ENCODE measurements at regions of chr17 and their contacts with region 1.

Region 1: GRCh38 chr17:64025732-64026294 is 5.4 kb upstream of the ICAM2 start:
- DNase-seq: peak; percentile 70 to 85
- H3K4me3 ChIP-seq: peak overlapping the region in 1 of 4 experiments; percentile 20; a peak in 1 of 8 replicates
- H3K27ac ChIP-seq: no peak overlapping the region
- H3K4me1 ChIP-seq: no peaks in the 10 kb centered on the region; a peak in 1 of 7 replicates
- H3K27me3 ChIP-seq: peaks cover 0 to 4% (median 1%) of the 10 kb centered on the region in 4 experiments; a peak in 3 of 7 replicates
- CTCF ChIP-seq: peak; percentile 94 to 99 (median 99)
- EP300 ChIP-seq: peak in 1 of 2 experiments; percentile 34; a peak in 1 of 3 replicates
- POLR2A ChIP-seq: no peak
- RAD21 ChIP-seq: peak; percentile 71 to 78

Region 2: DNA sequence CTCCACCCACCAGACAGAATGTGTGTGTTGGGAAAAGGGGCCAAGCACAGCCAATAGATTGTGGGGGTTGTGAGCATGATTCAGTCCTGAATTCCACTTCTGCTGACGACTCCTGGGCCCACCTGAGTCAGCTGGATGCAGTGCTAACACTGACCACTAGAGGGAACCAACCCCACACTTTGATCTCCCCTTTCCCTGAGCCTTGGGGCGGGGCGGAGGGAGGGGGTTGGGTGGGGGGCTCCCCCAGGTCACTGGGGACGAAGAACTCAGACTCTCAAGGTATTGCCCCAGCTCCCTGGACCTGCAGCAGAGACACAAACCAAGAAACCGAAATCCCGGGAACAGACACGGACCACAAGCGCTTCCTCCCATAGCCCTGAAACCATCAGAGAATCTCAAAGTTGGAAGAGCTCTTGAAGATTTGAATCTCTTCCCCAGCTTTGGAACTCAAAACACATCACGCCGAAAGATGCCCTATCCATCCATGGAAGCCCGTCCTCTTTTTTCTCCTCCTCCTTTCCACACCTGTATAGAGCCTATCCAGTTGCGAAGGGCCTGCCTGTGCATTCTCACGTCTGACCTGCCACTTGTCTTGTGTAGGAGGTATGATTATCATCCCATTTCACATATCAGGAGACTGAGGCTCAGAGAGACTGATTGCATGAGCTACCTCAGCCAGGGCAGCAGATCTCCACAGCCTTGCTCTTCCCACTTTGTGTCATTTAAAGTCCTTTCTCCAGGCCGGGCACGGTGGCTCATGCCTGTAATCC is 114.0 kb before region 1 on chr17:
- CTCF ChIA-PET with region 1: interaction called, 59 read pairs
- POLR2A ChIA-PET with region 1: no interaction called
- DNase-seq: peak in 1 of 2 experiments; percentile 87
- H3K4me3 ChIP-seq: no peak overlapping the region
- H3K27ac ChIP-seq: no peak overlapping the region
- H3K4me1 ChIP-seq: peaks cover 0 to 2% (median under 1%) of the 10 kb centered on the region in 4 experiments; a peak in 2 of 7 replicates
- H3K27me3 ChIP-seq: no peaks in the 10 kb centered on the region
- CTCF ChIP-seq: peak; percentile 63 to 83 (median 69)
- EP300 ChIP-seq: no peak
- POLR2A ChIP-seq: no peak
- RAD21 ChIP-seq: peak; percentile 62 to 65

Region 3: DNA sequence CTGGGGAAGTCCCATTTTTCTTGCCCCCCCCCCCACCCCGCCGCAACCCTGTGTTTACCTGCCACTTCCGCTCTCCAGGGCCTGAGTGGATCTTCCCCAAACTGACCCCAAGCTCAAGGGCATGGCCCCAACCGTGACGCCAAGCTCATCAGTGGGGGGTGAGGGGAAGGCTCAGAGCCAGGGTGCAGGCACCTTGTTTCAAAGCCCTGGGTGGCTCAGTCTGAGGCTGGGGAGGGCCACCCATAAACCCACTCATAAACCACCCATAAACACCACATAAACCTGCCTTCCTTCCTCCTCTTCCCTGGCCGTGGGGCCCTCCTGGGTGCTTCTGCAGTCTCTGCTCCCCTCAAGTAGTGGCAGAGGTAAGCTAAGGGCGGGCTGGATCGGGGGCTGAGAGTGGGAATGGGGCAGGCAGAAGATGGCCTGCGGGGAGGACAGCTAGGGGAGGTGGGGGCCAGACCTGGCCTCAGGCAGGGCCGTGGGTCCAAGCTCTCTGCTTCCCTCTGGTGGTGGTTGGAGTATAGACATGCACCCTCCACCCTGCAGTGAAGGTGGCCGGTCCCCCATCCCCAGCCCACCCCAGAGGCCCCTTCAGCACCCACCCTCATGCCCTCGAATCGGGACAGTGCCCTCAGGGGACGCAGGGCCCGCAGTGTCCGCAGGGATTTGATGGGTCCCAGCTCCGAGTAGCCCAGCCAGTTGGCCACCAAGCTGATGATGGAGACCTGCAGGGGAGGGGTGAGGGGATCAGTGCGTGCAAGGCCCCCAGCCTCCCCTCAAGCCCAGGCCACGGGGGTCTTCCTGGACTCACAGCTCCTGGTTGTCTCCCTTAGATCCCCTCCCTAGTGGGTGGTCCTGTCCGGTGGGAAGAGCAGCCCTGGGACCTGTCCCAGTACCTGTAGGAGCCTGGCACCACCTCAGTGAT is 79.1 kb before region 1 on chr17:
- CTCF ChIA-PET with region 1: interaction called, 12 read pairs
- POLR2A ChIA-PET with region 1: no interaction called
- DNase-seq: peak in 1 of 2 experiments; percentile 85
- H3K4me3 ChIP-seq: no peak overlapping the region
- H3K27ac ChIP-seq: no peak overlapping the region
- H3K4me1 ChIP-seq: peaks cover 0 to 8% (median 1%) of the 10 kb centered on the region in 4 experiments; a peak in 3 of 7 replicates
- H3K27me3 ChIP-seq: no peaks in the 10 kb centered on the region
- CTCF ChIP-seq: peak; percentile 75 to 92 (median 81)
- EP300 ChIP-seq: no peak
- POLR2A ChIP-seq: no peak
- RAD21 ChIP-seq: peak; percentile 64 to 71

Region 4: GRCh38 chr17:64036198-64036922 is 10.5 kb after region 1 on chr17:
- CTCF ChIA-PET with region 1: interaction called, 105 read pairs
- POLR2A ChIA-PET with region 1: no interaction called
- DNase-seq: peak in 1 of 2 experiments; percentile 65
- H3K4me3 ChIP-seq: no peak overlapping the region
- H3K27ac ChIP-seq: no peak overlapping the region
- H3K4me1 ChIP-seq: no peaks in the 10 kb centered on the region
- H3K27me3 ChIP-seq: no peaks in the 10 kb centered on the region
- CTCF ChIP-seq: peak; percentile 68 to 84 (median 82)
- EP300 ChIP-seq: no peak
- POLR2A ChIP-seq: no peak
- RAD21 ChIP-seq: peak; percentile 42 to 56; a peak in 3 of 4 replicates

Region 5: GRCh38 chr17:64063766-64064224 is 38.0 kb after region 1 on chr17:
- CTCF ChIA-PET with region 1: interaction called, 78 read pairs
- POLR2A ChIA-PET with region 1: interaction called, 3 read pairs
- DNase-seq: peak; percentile 43 to 82
- H3K4me3 ChIP-seq: peak overlapping the region in 1 of 4 experiments; percentile 35; a peak in 2 of 8 replicates
- H3K27ac ChIP-seq: no peak overlapping the region
- H3K4me1 ChIP-seq: peaks cover 0 to 3% (median 0%) of the 10 kb centered on the region in 4 experiments; a peak in 1 of 7 replicates
- H3K27me3 ChIP-seq: no peaks in the 10 kb centered on the region
- CTCF ChIP-seq: peak; percentile 90 to 93 (median 92)
- EP300 ChIP-seq: no peak
- POLR2A ChIP-seq: 0 out of 3 replicates have a peak, but pooled peaks of 1 of the 2 experiments have one; percentile 30
- RAD21 ChIP-seq: peak; percentile 89 to 90

Region 6: GRCh38 chr17:64160378-64160777 is 134.6 kb after region 1 on chr17:
- CTCF ChIA-PET with region 1: no interaction called
- POLR2A ChIA-PET with region 1: no interaction called
- DNase-seq: no peak
- H3K4me3 ChIP-seq: no peak overlapping the region
- H3K27ac ChIP-seq: no peak overlapping the region
- H3K4me1 ChIP-seq: peaks cover 0 to 3% (median 3%) of the 10 kb centered on the region in 4 experiments; a peak in 2 of 7 replicates
- H3K27me3 ChIP-seq: no peaks in the 10 kb centered on the region
- CTCF ChIP-seq: no peak
- EP300 ChIP-seq: no peak
- POLR2A ChIP-seq: no peak
- RAD21 ChIP-seq: no peak

Measured in H1 (cell line).